ENCODE measurements at regions of chr2 and their contacts with region 1.

Region 1: GRCh38 chr2:95076784-95077529 is 44.7 kb downstream of the MRPS5 start:
- DNase-seq: peak; percentile 84
- H3K4me3 ChIP-seq: peak overlapping the region; percentile 51 to 76
- H3K27ac ChIP-seq: no peak overlapping the region
- H3K4me1 ChIP-seq: peaks cover 0 to 7% of the 10 kb centered on the region in 2 experiments; a peak in 1 of 4 replicates
- H3K27me3 ChIP-seq: peaks cover 69% of the 10 kb centered on the region
- CTCF ChIP-seq: peak; percentile 81
- EP300 ChIP-seq: no peak
- RAD21 ChIP-seq: peak; percentile 52

Region 2: DNA sequence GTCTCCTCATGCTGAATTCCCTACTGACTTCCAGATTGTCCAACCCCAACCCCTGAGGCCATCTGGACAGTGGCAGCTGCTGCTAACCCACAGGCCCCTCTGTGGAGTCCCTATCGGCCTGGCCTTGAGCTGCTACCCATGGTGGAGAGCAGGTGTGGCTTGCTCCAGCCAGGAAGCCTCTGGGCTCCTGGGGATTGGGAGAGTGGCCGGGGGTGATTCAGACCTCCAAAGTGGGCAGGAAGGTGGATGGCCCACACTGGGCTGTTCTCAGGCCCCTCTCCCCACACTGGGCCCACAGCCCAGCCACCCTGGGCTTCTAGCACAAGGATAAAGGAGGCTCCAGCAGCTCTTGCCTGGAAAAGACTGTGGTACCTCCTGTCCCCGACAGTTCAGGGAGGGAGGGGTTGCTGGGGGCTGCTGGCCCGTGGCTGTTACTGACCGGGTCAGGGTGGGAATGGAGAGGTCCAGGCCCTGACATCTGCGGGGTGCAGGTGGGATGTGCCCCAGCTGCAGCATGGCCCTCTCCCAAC is 197.5 kb before region 1 on chr2:
- CTCF ChIA-PET with region 1: no interaction called
- POLR2A ChIA-PET with region 1: no interaction called
- DNase-seq: no peak
- H3K4me3 ChIP-seq: no peak overlapping the region
- H3K27ac ChIP-seq: no peak overlapping the region
- H3K4me1 ChIP-seq: no peaks in the 10 kb centered on the region
- H3K27me3 ChIP-seq: 0 out of 2 replicates have a peak, but pooled peaks cover 13% of the 10 kb centered on the region
- CTCF ChIP-seq: no peak
- EP300 ChIP-seq: no peak
- RAD21 ChIP-seq: no peak

Region 3: GRCh38 chr2:94923196-94923595 is 153.8 kb before region 1 on chr2:
- CTCF ChIA-PET with region 1: no interaction called
- POLR2A ChIA-PET with region 1: no interaction called
- DNase-seq: no peak
- H3K4me3 ChIP-seq: no peak overlapping the region
- H3K27ac ChIP-seq: no peak overlapping the region
- H3K4me1 ChIP-seq: no peaks in the 10 kb centered on the region
- H3K27me3 ChIP-seq: no peaks in the 10 kb centered on the region; the same call in 1 of the 2 replicates
- CTCF ChIP-seq: no peak
- EP300 ChIP-seq: no peak
- RAD21 ChIP-seq: no peak

Region 4: GRCh38 chr2:95022309-95023221 is 54.4 kb before region 1 on chr2:
- CTCF ChIA-PET with region 1: interaction called, 61 read pairs
- POLR2A ChIA-PET with region 1: no interaction called
- DNase-seq: peak; percentile 85
- H3K4me3 ChIP-seq: peak overlapping the region in 1 of 2 experiments; percentile 10; a peak in 1 of 4 replicates
- H3K27ac ChIP-seq: no peak overlapping the region
- H3K4me1 ChIP-seq: peaks cover 0 to 2% of the 10 kb centered on the region in 2 experiments; a peak in 1 of 4 replicates
- H3K27me3 ChIP-seq: peaks cover 85% of the 10 kb centered on the region
- CTCF ChIP-seq: peak; percentile 86
- EP300 ChIP-seq: no peak
- RAD21 ChIP-seq: peak; percentile 81

Region 5: GRCh38 chr2:95062242-95063085 is 14.5 kb before region 1 on chr2:
- CTCF ChIA-PET with region 1: interaction called, 15 read pairs
- POLR2A ChIA-PET with region 1: no interaction called
- DNase-seq: no peak
- H3K4me3 ChIP-seq: no peak overlapping the region
- H3K27ac ChIP-seq: no peak overlapping the region
- H3K4me1 ChIP-seq: no peaks in the 10 kb centered on the region
- H3K27me3 ChIP-seq: peaks cover 66% of the 10 kb centered on the region; the same call in 1 of the 2 replicates
- CTCF ChIP-seq: no peak
- EP300 ChIP-seq: no peak
- RAD21 ChIP-seq: no peak

Region 6: GRCh38 chr2:95115418-95115817 is 38.5 kb after region 1 on chr2:
- CTCF ChIA-PET with region 1: interaction called, 65 read pairs
- POLR2A ChIA-PET with region 1: no interaction called
- DNase-seq: peak; percentile 75
- H3K4me3 ChIP-seq: peak overlapping the region in 1 of 2 experiments; percentile 33; a peak in 1 of 4 replicates
- H3K27ac ChIP-seq: no peak overlapping the region
- H3K4me1 ChIP-seq: no peaks in the 10 kb centered on the region
- H3K27me3 ChIP-seq: no peaks in the 10 kb centered on the region
- CTCF ChIP-seq: peak; percentile 82
- EP300 ChIP-seq: no peak
- RAD21 ChIP-seq: peak; percentile 83

Region 7: DNA sequence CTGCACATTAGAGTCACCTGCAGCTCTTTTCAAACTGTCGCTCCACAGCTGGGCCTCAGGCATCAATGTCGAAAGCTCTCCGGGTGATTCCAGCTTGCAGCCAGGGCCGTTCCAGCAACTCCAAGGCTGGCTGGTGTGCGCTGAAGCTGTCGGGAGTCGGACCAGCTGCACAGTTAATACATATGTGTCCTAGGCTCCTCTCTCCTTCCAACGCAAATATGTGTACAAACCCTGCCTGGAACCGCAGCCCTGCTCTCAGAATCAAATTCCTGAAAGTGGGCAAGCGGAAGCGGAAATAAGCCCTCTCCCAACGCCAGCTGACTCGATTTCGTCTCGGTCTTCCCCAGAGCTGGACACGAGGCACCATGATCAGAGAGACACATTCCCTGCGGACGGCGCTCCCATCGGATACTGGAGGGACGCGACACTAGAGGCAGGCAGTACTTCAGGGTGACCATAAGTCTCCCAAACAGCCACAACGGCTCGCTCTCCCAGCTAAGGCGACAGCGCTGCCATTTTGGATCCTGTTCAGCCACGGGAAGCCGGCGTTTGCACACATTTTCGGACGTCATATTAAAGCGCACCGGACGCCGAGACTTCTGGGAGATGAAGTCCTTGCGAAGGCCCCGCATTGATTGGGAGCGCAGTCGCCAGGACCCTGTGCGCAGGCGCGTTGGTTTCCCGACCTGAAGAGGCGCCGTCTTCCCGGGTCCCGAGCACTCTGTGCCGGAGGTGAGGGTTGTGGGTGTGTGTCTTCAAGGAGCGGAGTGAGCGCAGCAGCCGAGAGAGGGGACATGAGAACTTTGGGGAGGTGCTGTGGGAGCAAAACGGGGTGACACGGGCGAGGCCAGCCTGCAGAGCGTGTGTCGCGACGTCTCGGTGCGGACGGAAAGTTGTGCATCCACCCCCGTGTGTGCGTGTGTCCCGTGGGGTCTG is 88.4 kb after region 1 on chr2 and contains the start of gene ZNF2:
- CTCF ChIA-PET with region 1: interaction called, 11 read pairs
- POLR2A ChIA-PET with region 1: no interaction called
- DNase-seq: peak; percentile 95
- H3K4me3 ChIP-seq: peak within 1 kb of the TSS; percentile 88 to 89
- H3K27ac ChIP-seq: peak within 1 kb of the TSS; percentile 85 to 96
- H3K4me1 ChIP-seq: peaks cover 0 to 15% of the 10 kb centered on the region in 2 experiments; a peak in 2 of 4 replicates
- H3K27me3 ChIP-seq: no peaks in the 10 kb centered on the region
- CTCF ChIP-seq: 0 out of 2 replicates have a peak, but pooled peaks have one; percentile 8
- EP300 ChIP-seq: no peak
- RAD21 ChIP-seq: no peak
- polyA plus RNA-seq, gene ZNF2: 1.6 and 2.3 TPM in 2 replicates